ENCODE measurements at regions of chr1 and their contacts with region 1.

Region 1: DNA sequence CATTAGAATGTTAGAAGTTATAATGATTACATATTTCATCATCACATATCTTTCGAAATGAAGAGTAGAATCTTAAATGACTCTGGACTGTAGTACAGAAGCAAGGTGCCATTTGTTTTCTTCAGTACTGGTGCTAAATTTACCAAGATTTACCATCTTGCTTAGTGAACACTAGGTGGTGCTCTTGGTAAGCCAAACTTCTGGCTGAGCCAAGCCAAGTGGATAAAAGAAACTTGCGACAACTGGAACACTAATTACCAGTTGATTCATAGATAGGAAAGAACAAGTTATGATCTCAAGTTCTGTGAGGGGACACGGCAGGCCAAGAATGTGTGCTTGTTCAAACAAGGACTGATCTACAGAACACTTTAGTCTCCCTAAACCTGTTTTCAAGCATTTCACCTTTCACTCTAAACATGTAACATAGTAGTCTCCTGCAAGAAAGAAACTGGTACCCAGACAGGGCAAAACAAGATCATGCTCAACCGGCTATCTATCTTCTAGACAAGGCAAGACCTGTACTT is 19.8 kb downstream of the SPRTN start:
- DNase-seq: peak; percentile 82
- H3K4me3 ChIP-seq: no peak overlapping the region
- H3K27ac ChIP-seq: no peak overlapping the region
- H3K4me1 ChIP-seq: peaks cover 7% of the 10 kb centered on the region
- H3K27me3 ChIP-seq: no peaks in the 10 kb centered on the region
- CTCF ChIP-seq: peak; percentile 54
- POLR2A ChIP-seq: no peak

Region 2: GRCh38 chr1:230568008-230568407 is 789.9 kb before region 1 on chr1:
- CTCF ChIA-PET with region 1: no interaction called
- POLR2A ChIA-PET with region 1: no interaction called
- dilution Hi-C with region 1: no loop called
- intact Hi-C with region 1: no loop called
- DNase-seq: no peak
- H3K4me3 ChIP-seq: no peak overlapping the region
- H3K27ac ChIP-seq: no peak overlapping the region
- H3K4me1 ChIP-seq: no peaks in the 10 kb centered on the region
- H3K27me3 ChIP-seq: no peaks in the 10 kb centered on the region
- CTCF ChIP-seq: no peak
- POLR2A ChIP-seq: no peak

Region 3: DNA sequence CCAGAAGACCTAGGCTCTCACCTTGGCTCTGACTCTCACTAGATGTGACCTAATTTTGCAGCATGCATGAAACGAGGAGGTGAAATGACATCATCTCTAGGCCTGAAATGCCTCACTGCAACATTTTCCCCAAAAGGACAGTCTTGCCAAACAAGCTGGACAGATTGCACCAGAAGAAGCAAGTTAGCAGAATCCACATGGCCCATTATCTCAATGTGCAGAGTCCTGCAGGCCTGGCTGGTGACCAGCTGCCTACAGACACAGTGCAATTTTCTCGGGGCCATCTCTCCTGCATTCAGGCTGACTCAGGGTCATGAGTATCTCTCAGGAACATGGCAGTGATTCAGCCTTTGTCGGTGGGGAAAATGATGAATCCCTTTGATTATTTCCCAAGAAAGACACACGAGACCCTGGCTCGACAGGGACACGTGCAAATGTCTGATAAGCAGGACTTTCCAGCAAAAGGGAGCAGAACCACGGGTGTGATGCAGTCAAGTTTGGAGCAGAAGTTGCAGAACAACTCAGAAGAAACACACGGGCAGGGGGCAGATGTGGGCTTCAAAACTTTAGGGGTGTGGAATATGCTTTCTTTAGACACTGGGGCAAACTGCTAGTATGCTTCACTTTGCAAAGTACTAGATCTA is 157.4 kb before region 1 on chr1:
- CTCF ChIA-PET with region 1: no interaction called
- POLR2A ChIA-PET with region 1: no interaction called
- dilution Hi-C with region 1: no loop called
- intact Hi-C with region 1: no loop called
- DNase-seq: no peak
- H3K4me3 ChIP-seq: no peak overlapping the region
- H3K27ac ChIP-seq: no peak overlapping the region
- H3K4me1 ChIP-seq: no peaks in the 10 kb centered on the region
- H3K27me3 ChIP-seq: peaks cover 0 to 1% of the 10 kb centered on the region in 2 experiments
- CTCF ChIP-seq: no peak
- POLR2A ChIP-seq: no peak

Region 4: DNA sequence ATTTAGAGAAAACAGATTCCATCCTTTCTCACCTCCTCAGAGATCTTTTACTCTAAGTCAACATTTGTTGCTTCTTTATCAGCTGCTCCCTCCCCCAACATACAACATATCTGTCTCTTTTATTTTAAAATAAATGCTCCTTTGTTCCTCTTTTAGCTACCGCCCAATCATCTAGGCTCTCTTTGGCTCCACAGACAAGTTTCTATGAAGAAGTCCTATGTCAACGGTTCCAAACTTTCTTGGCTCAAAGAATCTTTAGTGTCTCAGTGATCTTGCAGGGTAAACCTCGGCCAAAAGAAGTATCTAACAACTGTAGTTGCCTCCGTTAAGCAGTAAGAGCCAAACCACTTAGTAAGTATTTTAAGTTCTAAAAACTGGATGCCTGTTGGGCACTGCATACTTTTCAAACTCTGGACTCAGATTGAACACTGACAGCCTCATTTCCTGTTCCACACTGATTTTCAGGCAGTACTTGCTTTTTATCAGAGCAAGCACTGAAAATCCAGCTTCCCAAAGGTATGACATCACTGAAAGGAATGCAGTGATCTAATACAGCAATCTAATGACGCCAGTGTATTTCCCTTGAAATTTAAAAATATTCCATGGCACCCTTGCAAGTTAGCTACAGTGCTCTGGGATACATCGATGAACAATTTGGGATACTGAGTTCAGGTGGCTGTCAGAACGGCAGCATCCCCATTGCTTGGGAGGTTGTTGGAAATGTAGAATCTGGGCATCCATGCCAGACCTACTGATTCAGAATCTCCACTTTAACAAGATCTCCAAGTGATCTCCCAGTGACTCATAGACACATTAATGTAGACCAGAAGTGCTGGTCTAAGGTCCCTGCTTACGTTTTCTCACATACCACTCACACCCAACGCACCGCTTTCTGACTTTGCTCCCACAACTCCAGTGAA is 37.4 kb after region 1 on chr1:
- CTCF ChIA-PET with region 1: no interaction called
- POLR2A ChIA-PET with region 1: no interaction called
- dilution Hi-C with region 1: no loop called
- intact Hi-C with region 1: loop called (anchors 1 kb)
- DNase-seq: peak; percentile 93
- H3K4me3 ChIP-seq: peak overlapping the region in 1 of 3 experiments; percentile 18
- H3K27ac ChIP-seq: peak overlapping the region; percentile 100
- H3K4me1 ChIP-seq: peaks cover 47% of the 10 kb centered on the region
- H3K27me3 ChIP-seq: no peaks in the 10 kb centered on the region
- CTCF ChIP-seq: no peak
- POLR2A ChIP-seq: peak; percentile 51

Region 5: DNA sequence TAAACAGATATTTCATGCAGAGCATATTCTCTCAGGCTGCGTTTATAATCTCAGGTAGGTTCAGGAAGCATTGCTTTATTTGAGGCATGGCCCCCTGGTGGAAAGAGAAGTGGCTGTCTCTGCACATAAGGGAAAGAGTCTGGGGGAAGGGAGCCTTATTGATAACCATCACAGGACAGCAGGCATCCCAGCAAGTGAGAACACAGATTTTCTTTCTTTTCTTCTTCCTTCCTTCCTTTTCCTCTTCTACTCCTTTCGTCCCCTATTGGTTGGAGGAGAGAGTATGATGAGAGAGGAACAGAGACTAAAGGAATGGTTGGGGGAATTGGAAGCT is 192.5 kb after region 1 on chr1:
- CTCF ChIA-PET with region 1: interaction called, 3 read pairs
- POLR2A ChIA-PET with region 1: no interaction called
- dilution Hi-C with region 1: no loop called
- intact Hi-C with region 1: loop called (anchors 1 kb)
- DNase-seq: no peak
- H3K4me3 ChIP-seq: no peak overlapping the region
- H3K27ac ChIP-seq: no peak overlapping the region
- H3K4me1 ChIP-seq: peaks cover 4% of the 10 kb centered on the region
- H3K27me3 ChIP-seq: no peaks in the 10 kb centered on the region
- CTCF ChIP-seq: peak; percentile 37 to 53
- POLR2A ChIP-seq: no peak

Region 6: GRCh38 chr1:231590453-231591198 is 232.7 kb after region 1 on chr1:
- CTCF ChIA-PET with region 1: interaction called, 20 read pairs
- POLR2A ChIA-PET with region 1: no interaction called
- dilution Hi-C with region 1: no loop called
- intact Hi-C with region 1: loop called (anchors 1 kb)
- DNase-seq: peak; percentile 78
- H3K4me3 ChIP-seq: no peak overlapping the region
- H3K27ac ChIP-seq: no peak overlapping the region
- H3K4me1 ChIP-seq: no peaks in the 10 kb centered on the region
- H3K27me3 ChIP-seq: no peaks in the 10 kb centered on the region
- CTCF ChIP-seq: peak; percentile 69 to 81
- POLR2A ChIP-seq: no peak

Measured in endothelial cell of umbilical vein (primary cell).